ENCODE measurements at regions of chr2 and their contacts with region 1.

Region 1: DNA sequence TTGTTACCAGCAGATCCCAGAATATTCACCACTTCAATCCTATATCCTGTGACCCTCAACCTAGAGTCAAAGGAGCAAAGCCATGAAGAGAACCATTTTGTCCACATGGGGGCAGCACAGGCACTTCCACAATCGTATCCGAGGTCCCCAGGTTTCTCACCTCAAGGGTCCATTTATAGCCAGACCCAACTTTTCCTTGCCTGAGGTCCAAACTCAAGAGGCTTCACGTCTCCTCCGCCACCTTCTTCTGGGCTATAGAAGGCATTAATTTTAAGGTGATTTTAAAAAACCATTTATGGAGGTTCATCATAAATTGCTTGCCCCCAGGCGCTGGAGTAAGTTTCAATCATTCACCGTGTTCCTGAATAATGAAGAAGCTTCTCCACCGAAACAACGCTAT is 111.6 kb upstream of the NABP1 start:
- DNase-seq: peak; percentile 50
- ATAC-seq: peak; percentile 79

Region 2: DNA sequence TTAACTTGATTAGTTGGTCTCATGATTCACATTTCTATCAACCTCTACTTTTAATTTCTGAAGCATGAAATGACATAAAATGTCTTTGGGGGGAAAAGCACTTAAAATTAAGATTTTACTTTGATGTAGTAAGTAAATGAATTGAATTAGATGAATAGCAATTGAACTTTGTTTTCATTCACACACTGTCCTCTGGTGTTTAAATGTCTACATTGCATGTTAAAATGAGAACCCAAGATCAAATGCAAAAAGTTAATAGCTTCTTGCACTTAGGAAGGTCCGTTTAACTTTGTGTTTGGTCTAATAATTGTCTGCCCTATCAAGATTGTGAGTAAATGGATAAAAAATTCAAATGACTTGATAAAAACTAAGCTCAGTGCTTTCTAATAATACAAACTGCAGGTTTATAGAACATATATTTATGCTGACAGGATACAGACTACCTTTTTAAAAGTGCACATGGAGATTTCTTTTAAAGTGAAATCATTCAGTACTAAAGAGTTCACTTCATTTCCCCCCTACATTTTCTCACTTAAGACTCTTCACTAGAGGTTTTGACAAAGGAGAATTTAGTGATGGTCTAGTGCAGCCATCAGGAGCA is 44.6 kb before region 1 on chr2:
- intact Hi-C with region 1: no loop called
- DNase-seq: no peak
- ATAC-seq: no peak

Region 3: GRCh38 chr2:191691016-191691735 is 124.8 kb after region 1 on chr2:
- intact Hi-C with region 1: loop called (anchors 5 kb)
- DNase-seq: no peak
- ATAC-seq: peak; percentile 86

Measured in Right ventricle myocardium superior (tissue), 1 donor.